ENCODE measurements at regions of chr9 and their contacts with region 1.

Region 1: GRCh38 chr9:127980706-127981558 is at the start of gene EEIG1:
- DNase-seq: peak; percentile 94
- H3K4me3 ChIP-seq: peak within 1 kb of the TSS; percentile 26 to 61 (median 61)
- H3K27ac ChIP-seq: peak within 1 kb of the TSS; percentile 54
- H3K4me1 ChIP-seq: peaks cover 22% of the 10 kb centered on the region
- H3K27me3 ChIP-seq: no peaks in the 10 kb centered on the region
- CTCF ChIP-seq: no peak
- POLR2A ChIP-seq: peak; percentile 79
- total RNA-seq, gene EEIG1: 16.4 and 19.0 TPM in 2 replicates

Region 2: DNA sequence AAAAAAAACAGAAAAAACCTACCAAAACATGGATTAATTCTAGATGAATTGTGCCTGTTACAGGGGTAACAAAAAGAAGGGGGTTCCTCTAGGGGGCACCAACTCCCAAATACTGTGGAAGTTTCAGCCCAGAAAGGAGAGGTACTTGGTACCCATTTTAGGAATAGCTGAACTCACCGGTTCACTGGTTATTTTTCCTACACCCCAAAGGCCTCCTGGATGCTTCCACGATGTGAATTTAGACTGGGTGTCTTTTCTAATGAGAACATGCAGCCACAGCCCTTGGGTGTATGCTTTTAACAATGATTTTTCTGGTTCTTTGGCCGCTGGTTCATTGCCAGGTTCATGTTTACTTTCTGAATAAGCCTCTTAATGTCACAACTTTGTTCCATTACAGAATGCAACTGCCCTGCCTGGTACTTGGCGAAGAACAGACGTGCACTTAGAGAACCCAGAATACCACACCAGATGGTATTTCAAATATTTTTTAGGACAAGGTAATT is 669.6 kb before region 1 on chr9:
- CTCF ChIA-PET with region 1: no interaction called
- POLR2A ChIA-PET with region 1: no interaction called
- dilution Hi-C with region 1: no loop called
- intact Hi-C with region 1: no loop called
- DNase-seq: peak; percentile 74
- H3K4me3 ChIP-seq: no peak overlapping the region
- H3K27ac ChIP-seq: no peak overlapping the region
- H3K4me1 ChIP-seq: peaks cover 5% of the 10 kb centered on the region
- H3K27me3 ChIP-seq: no peaks in the 10 kb centered on the region
- CTCF ChIP-seq: peak; percentile 44 to 56
- POLR2A ChIP-seq: no peak

Region 3: GRCh38 chr9:127963359-127964064 is 17.4 kb before region 1 on chr9:
- CTCF ChIA-PET with region 1: interaction called, 4 read pairs
- POLR2A ChIA-PET with region 1: no interaction called
- dilution Hi-C with region 1: no loop called
- intact Hi-C with region 1: loop called (anchors 2 kb)
- DNase-seq: no peak
- H3K4me3 ChIP-seq: no peak overlapping the region
- H3K27ac ChIP-seq: no peak overlapping the region
- H3K4me1 ChIP-seq: peaks cover 12% of the 10 kb centered on the region
- H3K27me3 ChIP-seq: no peaks in the 10 kb centered on the region
- CTCF ChIP-seq: no peak
- POLR2A ChIP-seq: no peak

Region 4: GRCh38 chr9:128127990-128128835 is 147.3 kb after region 1 on chr9:
- CTCF ChIA-PET with region 1: no interaction called
- POLR2A ChIA-PET with region 1: no interaction called
- dilution Hi-C with region 1: no loop called
- intact Hi-C with region 1: no loop called
- DNase-seq: peak; percentile 84
- H3K4me3 ChIP-seq: peak overlapping the region; percentile 83 to 92 (median 90)
- H3K27ac ChIP-seq: peak overlapping the region; percentile 76
- H3K4me1 ChIP-seq: peaks cover 11% of the 10 kb centered on the region
- H3K27me3 ChIP-seq: peaks cover 8 to 9% of the 10 kb centered on the region in 2 experiments
- CTCF ChIP-seq: no peak
- POLR2A ChIP-seq: peak; percentile 32

Measured in endothelial cell of umbilical vein (primary cell).